ENCODE measurements at regions of chr22 and their contacts with region 1.

Region 1: DNA sequence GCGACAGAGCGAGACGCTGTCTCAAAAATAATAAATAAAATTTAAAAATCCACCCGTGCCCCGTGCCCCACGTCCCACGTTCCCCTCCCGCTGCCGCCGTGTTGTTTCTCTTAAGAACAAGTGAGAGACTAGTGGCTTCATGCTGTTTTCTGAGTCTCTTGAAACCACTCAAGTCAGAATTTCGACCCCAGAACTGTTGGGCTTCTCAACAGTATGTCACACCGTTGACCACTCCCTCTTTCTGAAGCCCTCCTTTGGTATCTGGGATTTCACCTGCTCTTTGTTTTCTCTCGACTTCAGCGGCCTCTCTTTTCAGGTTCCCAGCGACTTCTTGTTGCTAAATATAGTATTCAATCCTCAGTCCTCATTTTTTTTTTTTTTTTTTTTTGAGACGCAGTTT is 974 bp downstream of the PPIL2 start:
- DNase-seq: no peak
- H3K4me3 ChIP-seq: peak overlapping the region; percentile 80
- H3K27ac ChIP-seq: no peak overlapping the region
- H3K27me3 ChIP-seq: peaks cover 2% of the 10 kb centered on the region
- CTCF ChIP-seq: no peak

Region 2: GRCh38 chr22:21652547-21653545 is 13.9 kb before region 1 on chr22:
- CTCF ChIA-PET with region 1: interaction called, 10 read pairs
- POLR2A ChIA-PET with region 1: interaction called, 3 read pairs
- DNase-seq: no peak
- H3K4me3 ChIP-seq: peak overlapping the region; percentile 91
- H3K27ac ChIP-seq: no peak overlapping the region
- H3K27me3 ChIP-seq: no peaks in the 10 kb centered on the region
- CTCF ChIP-seq: no peak

Region 3: DNA sequence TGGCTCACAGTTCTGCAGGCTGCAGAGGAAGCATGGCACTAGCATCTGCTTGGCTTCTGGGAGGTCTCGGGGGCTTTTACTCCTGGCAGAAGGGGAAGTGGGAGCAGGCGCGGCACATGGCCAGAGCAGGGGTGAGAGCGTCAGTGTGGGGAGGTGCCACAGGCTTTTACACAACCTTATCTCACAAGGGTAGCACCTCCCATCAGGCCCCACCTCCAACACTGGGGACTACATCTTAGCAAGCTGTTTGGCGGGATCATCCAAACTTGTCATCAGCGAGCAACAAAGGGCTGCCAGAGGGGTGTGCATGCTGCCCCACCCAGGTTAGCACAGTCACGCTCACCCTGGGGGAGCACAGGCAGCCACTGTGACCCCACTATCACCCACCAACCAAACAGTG is 87.7 kb after region 1 on chr22:
- CTCF ChIA-PET with region 1: no interaction called
- POLR2A ChIA-PET with region 1: no interaction called
- DNase-seq: no peak
- H3K4me3 ChIP-seq: no peak overlapping the region
- H3K27ac ChIP-seq: peak overlapping the region; percentile 21
- H3K27me3 ChIP-seq: no peaks in the 10 kb centered on the region
- CTCF ChIP-seq: no peak

Measured in AG04450 (cell line).